AG04449 (cell line): ENCODE measurements at regions of chr14 and their contacts with region 1.

Region 1: DNA sequence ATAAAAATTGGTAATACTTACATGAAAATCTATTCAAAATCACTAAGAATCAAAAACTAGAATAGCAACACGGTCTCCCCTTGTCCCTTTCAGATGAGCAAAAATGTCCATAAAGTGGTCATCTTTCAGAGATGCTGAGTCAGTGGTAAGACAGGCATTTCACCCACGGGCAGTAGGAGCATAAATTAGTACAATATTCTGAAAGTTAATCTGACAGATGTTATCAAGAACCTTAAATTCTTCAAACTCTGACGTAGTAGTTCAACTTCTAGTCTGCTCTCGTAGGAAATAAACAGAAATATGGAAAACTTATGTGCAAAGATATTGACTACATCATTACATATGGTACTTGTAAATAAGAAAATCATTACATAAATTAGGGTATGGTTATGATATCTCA is 33.1 kb upstream of the GNPNAT1 start:
- DNase-seq: no peak
- H3K4me3 ChIP-seq: no peak overlapping the region
- CTCF ChIP-seq: no peak

Region 2: DNA sequence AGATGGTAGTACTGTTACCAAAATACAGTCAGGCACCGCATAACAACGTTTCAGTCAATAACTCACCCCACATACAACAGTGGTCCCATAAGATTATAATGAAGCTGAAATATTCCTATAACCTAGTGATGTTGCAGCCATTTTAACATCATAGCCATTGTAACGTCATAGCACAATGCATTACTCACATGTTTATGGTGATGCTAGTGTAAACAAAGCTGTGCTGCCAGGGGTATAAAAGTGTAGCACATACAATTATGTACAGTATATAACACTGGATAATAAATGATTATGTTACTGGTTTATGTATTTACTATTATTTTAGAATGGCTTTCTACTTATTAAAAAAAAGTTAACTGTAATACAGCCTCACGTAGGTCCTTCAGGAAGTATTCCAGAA is 234.9 kb before region 1 on chr14:
- CTCF ChIA-PET with region 1: no interaction called
- POLR2A ChIA-PET with region 1: no interaction called
- DNase-seq: no peak
- H3K4me3 ChIP-seq: no peak overlapping the region
- CTCF ChIP-seq: no peak

Region 3: DNA sequence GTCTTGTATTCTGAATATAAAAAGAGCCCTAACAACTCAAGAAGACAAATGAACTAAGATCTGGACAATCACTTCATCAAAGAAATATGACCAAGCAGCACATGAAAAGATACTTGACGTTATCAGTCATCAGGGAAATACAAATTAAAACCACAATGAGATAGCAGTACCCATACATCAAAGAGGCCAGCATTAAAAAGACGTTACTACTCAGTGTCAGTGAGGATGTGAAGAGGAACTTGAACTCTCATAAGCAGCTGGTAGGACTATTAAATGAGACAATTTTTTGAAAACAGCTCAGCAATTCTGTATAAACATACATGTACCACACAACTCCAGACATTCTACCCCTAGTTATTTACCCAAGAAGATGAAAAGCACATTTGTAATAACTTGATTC is 70.5 kb after region 1 on chr14:
- CTCF ChIA-PET with region 1: no interaction called
- POLR2A ChIA-PET with region 1: no interaction called
- DNase-seq: no peak
- H3K4me3 ChIP-seq: no peak overlapping the region
- CTCF ChIP-seq: no peak

Region 4: DNA sequence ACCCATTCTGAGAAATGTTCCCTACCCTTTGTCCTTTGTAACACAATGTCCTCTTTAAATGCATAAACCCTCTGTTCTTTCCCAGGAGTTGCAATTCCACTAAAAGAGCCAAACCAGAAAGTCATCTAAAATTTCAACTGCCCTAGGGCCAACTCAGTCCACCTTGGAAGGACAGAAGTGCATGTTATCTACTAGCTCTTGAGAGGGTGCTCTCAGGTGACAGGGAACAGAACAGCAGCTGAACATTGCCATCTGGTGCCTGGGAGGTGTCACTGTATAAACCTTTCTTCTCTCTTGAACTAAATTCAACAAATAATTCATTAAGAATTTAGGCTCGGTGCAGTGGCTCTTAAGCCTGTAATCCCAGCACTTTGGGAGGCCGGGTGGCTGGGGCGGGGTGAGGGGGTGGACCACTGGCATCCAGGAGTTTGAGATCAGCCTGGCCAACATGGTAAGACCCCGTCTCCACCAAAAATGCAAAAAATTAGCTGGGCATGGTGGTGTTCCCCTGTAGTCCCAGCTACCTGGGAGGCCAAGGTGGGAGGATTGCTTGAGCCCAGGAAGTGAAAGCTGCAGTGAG is 136.6 kb after region 1 on chr14:
- CTCF ChIA-PET with region 1: interaction called, 88 read pairs
- POLR2A ChIA-PET with region 1: no interaction called
- DNase-seq: no peak
- H3K4me3 ChIP-seq: no peak overlapping the region
- CTCF ChIP-seq: peak; percentile 48

Region 5: GRCh38 chr14:53306267-53306721 is 481.8 kb after region 1 on chr14:
- CTCF ChIA-PET with region 1: interaction called, 10 read pairs
- POLR2A ChIA-PET with region 1: no interaction called
- DNase-seq: no peak
- H3K4me3 ChIP-seq: peak overlapping the region; percentile 51
- CTCF ChIP-seq: peak; percentile 61